CD8-positive, alpha-beta memory T cell (primary cell): ENCODE measurements at regions of chr2 and their contacts with region 1.

Region 1: DNA sequence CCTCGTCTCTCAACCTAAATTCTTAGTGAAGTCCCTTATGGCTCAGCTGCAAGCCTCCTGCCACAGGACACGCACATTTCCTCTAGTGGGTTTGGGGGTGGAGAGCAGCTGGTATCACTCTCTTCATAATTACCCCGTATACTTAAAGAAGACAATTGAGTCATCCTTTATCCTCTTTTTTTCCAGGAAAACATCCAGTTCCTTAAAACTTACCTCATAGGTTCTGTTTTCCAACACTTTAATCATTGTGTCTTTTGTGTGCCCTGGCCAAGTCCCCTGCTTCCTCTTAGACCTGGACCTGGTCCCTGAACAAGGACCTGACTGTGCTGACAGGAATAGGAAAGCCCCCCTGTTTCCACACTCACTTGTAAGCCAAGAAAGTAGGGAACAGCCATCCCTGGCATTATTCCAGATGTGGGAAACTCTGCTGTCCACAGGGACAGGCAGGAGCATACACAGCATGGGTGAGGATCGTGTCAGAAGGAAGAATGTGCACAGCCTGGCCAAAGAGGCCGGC is 42.3 kb upstream of the MYO1B start:
- DNase-seq: peak in 4 of 5 donors; percentile 6 to 57 (median 18)
- H3K4me3 ChIP-seq: peak overlapping the region; percentile 26
- H3K4me3 Mint-ChIP-seq: peak overlapping the region; percentile 32 to 86 (median 66)
- H3K27ac ChIP-seq: no peak overlapping the region
- H3K27ac Mint-ChIP-seq: peak overlapping the region; percentile 84 to 96 (median 92)
- H3K4me1 ChIP-seq: peaks cover 43% of the 10 kb centered on the region
- H3K4me1 Mint-ChIP-seq: peaks cover 53 to 58% (median 57%) of the 10 kb centered on the region in 3 donors
- H3K27me3 ChIP-seq: no peaks in the 10 kb centered on the region
- H3K27me3 Mint-ChIP-seq: no peaks in the 10 kb centered on the region

Region 2: GRCh38 chr2:191218292-191218898 is 15.5 kb after region 1 on chr2:
- CTCF ChIA-PET with region 1: interaction called, 13 read pairs
- POLR2A ChIA-PET with region 1: no interaction called
- DNase-seq: peak in 4 of 5 donors; percentile 9 to 56 (median 17)
- H3K4me3 ChIP-seq: no peak overlapping the region
- H3K4me3 Mint-ChIP-seq: no peak overlapping the region
- H3K27ac ChIP-seq: no peak overlapping the region
- H3K27ac Mint-ChIP-seq: no peak overlapping the region
- H3K4me1 ChIP-seq: no peaks in the 10 kb centered on the region
- H3K4me1 Mint-ChIP-seq: no peaks in the 10 kb centered on the region
- H3K27me3 ChIP-seq: no peaks in the 10 kb centered on the region
- H3K27me3 Mint-ChIP-seq: peaks cover 0 to 3% of the 10 kb centered on the region in 2 donors

Region 3: GRCh38 chr2:191927319-191927867 is 724.5 kb after region 1 on chr2:
- CTCF ChIA-PET with region 1: no interaction called
- POLR2A ChIA-PET with region 1: no interaction called
- DNase-seq: no peak
- H3K4me3 ChIP-seq: no peak overlapping the region
- H3K4me3 Mint-ChIP-seq: no peak overlapping the region
- H3K27ac ChIP-seq: no peak overlapping the region
- H3K27ac Mint-ChIP-seq: no peak overlapping the region
- H3K4me1 ChIP-seq: no peaks in the 10 kb centered on the region
- H3K4me1 Mint-ChIP-seq: no peaks in the 10 kb centered on the region
- H3K27me3 ChIP-seq: no peaks in the 10 kb centered on the region
- H3K27me3 Mint-ChIP-seq: peaks cover 0 to 14% of the 10 kb centered on the region in 2 donors